MCF 10A (cell line): ENCODE measurements at regions of chr11 and their contacts with region 1.

Region 1: GRCh38 chr11:123195188-123196059 is at the start of gene CLMP:
- DNase-seq: peak; percentile 77
- H3K4me3 Mint-ChIP-seq: peak within 1 kb of the TSS; percentile 96
- H3K27ac Mint-ChIP-seq: peak within 1 kb of the TSS; percentile 93
- H3K4me1 Mint-ChIP-seq: peaks cover 53% of the 10 kb centered on the region
- H3K27me3 Mint-ChIP-seq: no peaks in the 10 kb centered on the region
- CTCF ChIP-seq: no peak
- total RNA-seq, gene CLMP: 86.1 and 91.9 TPM in 2 replicates

Region 2: DNA sequence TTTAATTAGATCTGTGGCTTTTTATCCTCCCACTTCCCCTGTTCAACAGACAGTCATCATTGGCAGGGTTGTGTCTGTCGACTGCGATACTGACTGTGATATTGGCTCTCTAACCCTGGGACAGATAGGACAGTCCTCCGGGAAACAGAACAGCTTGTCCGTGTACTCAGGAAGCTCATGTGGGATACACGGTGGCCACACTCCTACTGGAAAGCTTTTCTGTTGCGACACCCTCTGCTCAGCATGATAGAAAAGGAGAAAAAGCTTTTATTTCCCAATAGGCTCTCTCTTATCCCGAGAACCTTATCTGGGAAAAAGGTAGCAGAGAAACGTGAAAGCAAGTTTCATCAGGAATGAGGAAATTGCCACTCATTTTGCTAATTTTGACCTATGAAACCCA is 73.1 kb before region 1 on chr11:
- CTCF ChIA-PET with region 1: no interaction called
- POLR2A ChIA-PET with region 1: interaction called, 10 read pairs
- intact Hi-C with region 1: loop called (anchors 2 kb)
- DNase-seq: peak; percentile 97
- H3K4me3 Mint-ChIP-seq: peak overlapping the region; percentile 59
- H3K27ac Mint-ChIP-seq: peak overlapping the region; percentile 97
- H3K4me1 Mint-ChIP-seq: peaks cover 30% of the 10 kb centered on the region
- H3K27me3 Mint-ChIP-seq: no peaks in the 10 kb centered on the region
- CTCF ChIP-seq: no peak

Region 3: GRCh38 chr11:123145220-123145619 is 50.2 kb before region 1 on chr11:
- CTCF ChIA-PET with region 1: no interaction called
- POLR2A ChIA-PET with region 1: interaction called, 10 read pairs
- intact Hi-C with region 1: no loop called
- DNase-seq: peak; percentile 99
- H3K4me3 Mint-ChIP-seq: peak overlapping the region; percentile 57
- H3K27ac Mint-ChIP-seq: peak overlapping the region; percentile 72
- H3K4me1 Mint-ChIP-seq: peaks cover 27% of the 10 kb centered on the region
- H3K27me3 Mint-ChIP-seq: no peaks in the 10 kb centered on the region
- CTCF ChIP-seq: no peak

Region 4: DNA sequence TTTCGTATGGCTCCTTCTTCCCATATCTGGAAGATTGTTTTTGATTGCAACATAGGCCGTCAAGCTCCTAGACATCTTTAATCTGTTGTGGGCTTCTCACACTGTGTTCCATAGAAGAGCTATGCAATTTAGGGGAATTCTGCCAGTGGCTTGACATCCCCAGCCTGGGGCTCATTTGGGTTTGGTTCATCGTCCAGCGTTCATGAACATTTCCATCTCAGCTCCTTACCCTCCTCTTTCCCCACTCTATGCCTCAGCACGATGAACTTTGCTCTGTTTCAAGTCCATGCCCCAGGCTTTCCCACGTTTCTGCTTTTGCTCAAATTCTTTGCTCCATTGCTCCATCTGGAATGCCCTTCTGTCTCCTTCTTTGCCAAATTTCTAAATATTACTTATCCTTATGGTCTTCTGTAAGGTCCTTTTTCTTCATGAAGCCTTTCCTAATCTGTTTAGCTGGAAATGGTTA is 25.7 kb after region 1 on chr11:
- CTCF ChIA-PET with region 1: no interaction called
- POLR2A ChIA-PET with region 1: no interaction called
- intact Hi-C with region 1: no loop called
- DNase-seq: no peak
- H3K4me3 Mint-ChIP-seq: no peak overlapping the region
- H3K27ac Mint-ChIP-seq: no peak overlapping the region
- H3K4me1 Mint-ChIP-seq: peaks cover 7% of the 10 kb centered on the region
- H3K27me3 Mint-ChIP-seq: no peaks in the 10 kb centered on the region
- CTCF ChIP-seq: no peak